ENCODE measurements at regions of chr16 and their contacts with region 1.

Region 1: DNA sequence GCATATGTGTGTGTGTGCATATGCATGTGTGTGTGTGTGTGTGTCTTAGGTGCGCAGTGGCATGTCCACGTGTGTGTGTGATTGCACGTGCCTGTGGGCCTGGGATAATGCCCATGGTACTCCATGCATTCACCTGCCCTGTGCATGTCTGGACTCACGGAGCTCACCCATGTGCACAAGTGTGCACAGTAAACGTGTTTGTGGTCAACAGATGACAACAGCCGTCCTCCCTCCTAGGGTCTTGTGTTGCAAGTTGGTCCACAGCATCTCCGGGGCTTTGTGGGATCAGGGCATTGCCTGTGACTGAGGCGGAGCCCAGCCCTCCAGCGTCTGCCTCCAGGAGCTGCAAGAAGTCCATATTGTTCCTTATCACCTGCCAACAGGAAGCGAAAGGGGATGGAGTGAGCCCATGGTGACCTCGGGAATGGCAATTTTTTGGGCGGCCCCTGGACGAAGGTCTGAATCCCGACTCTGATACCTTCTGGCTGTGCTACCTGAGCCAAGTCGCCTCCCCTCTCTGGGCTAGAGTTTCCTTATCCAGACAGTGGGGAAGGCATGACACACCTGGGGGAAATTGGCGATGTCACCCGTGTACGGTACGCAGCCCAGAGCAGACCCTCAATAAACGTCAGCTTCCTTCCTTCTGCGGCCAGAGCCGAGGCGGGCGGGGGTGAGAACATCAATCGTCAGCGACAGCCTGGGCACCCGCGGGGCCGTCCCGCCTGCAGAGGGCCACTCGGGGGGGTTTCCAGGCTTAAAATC is 47.6 kb downstream of the IL21R start:
- DNase-seq: peak; percentile 78
- ATAC-seq: peak; percentile 78
- H3K4me3 Mint-ChIP-seq: peak overlapping the region; percentile 85
- H3K27ac Mint-ChIP-seq: peak overlapping the region; percentile 99
- H3K4me1 Mint-ChIP-seq: peaks cover 97% of the 10 kb centered on the region
- H3K27me3 Mint-ChIP-seq: no peaks in the 10 kb centered on the region
- CTCF ChIP-seq: no peak

Region 2: GRCh38 chr16:27203429-27204231 is 246.0 kb before region 1 on chr16 and contains the start of gene KDM8:
- CTCF ChIA-PET with region 1: no interaction called
- POLR2A ChIA-PET with region 1: interaction called, 13 read pairs
- intact Hi-C with region 1: no loop called
- DNase-seq: peak; percentile 97
- ATAC-seq: peak; percentile 87
- H3K4me3 Mint-ChIP-seq: peak within 1 kb of the TSS; percentile 99
- H3K27ac Mint-ChIP-seq: peak within 1 kb of the TSS; percentile 100
- H3K4me1 Mint-ChIP-seq: peaks cover 66% of the 10 kb centered on the region
- H3K27me3 Mint-ChIP-seq: no peaks in the 10 kb centered on the region
- CTCF ChIP-seq: no peak
- total RNA-seq, gene KDM8: 13.4 and 17.9 TPM in 2 replicates

Region 3: DNA sequence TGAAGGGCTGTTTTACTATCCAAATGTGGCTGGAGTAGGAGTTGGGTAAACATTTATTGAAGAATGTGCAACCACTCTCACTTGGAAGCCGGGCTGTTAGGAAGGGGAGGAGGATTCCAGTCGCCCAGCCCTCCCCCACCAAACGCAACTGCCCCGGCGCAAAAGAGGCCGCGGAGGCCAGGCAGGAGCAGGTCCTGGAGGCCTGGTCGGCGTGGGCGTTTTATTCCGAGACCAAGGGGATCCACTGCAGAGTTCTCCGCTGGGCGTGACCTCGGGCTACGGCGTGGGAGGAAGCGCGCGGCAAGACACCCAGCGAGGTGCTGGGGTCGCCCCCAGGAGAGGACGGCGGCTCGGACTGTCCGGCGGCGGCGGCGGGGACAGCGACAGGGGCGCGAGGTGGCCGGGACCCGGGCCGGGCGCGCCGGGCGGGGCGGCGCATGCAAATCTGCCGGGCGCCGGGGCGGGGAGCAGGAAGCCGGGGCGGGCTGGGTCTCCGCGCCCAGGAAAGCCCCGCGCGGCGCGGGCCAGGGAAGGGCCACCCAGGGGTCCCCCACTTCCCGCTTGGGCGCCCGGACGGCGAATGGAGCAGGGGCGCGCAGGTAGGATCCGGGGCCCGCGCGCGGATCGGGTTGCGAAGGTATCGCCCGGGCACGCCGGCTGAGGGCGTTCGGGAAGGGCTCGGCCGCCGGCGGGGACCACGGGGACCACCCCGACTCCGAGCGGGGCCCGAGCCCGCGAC is 136.0 kb before region 1 on chr16 and contains the start of gene IL4R:
- CTCF ChIA-PET with region 1: no interaction called
- POLR2A ChIA-PET with region 1: interaction called, 6 read pairs
- intact Hi-C with region 1: loop called (anchors 1 kb)
- DNase-seq: peak; percentile 77
- ATAC-seq: peak; percentile 49
- H3K4me3 Mint-ChIP-seq: peak within 1 kb of the TSS; percentile 88
- H3K27ac Mint-ChIP-seq: peak within 1 kb of the TSS; percentile 90
- H3K4me1 Mint-ChIP-seq: peaks cover 76% of the 10 kb centered on the region
- H3K27me3 Mint-ChIP-seq: no peaks in the 10 kb centered on the region
- CTCF ChIP-seq: no peak
- total RNA-seq, gene IL4R: 176 and 202 TPM in 2 replicates

Region 4: DNA sequence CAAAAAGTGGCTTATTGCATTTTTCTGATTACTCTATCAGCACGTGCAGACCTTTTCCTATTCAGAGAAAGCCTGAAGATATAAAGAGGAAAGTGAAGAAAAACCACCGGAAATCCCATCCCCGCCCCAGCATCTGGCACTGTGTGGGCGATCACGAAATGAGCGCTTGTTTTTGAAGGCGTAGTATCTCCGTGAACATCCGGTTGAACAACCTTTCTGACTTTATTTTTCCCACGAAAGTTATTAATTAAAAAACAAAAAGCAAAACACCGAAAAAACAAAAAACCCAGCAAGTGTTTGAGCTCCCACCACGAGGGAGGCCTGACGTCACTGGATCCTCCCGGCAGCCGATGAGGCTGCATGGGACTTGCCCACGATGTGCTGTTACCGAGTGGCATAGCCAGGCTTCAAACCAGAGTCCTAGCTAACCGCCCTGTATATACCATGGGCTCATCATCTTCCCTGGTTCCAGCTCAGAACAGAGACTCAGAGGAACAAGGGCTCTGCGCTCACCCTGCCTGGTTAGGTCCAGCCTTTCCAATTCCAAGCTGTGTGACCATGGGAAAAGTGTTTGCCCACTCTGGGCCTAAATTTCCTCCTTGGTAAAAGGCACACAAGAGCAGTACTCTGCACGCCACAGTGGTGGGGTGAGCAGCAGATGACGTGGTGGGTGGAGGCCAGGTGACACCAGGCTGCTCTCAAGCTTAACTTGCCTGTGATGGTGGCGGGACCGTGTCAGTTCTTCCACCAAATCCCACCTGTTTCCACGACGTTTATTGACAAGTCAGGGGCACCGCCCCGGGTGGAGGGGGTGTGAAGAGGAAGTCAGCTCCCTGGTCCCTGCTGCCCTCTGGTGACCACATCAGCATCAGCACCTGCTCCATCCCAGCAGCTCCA is 81.9 kb before region 1 on chr16:
- CTCF ChIA-PET with region 1: interaction called, 13 read pairs
- POLR2A ChIA-PET with region 1: interaction called, 92 read pairs
- intact Hi-C with region 1: loop called (anchors 1 kb)
- DNase-seq: peak; percentile 76
- ATAC-seq: peak; percentile 78
- H3K4me3 Mint-ChIP-seq: peak overlapping the region; percentile 70
- H3K27ac Mint-ChIP-seq: peak overlapping the region; percentile 96
- H3K4me1 Mint-ChIP-seq: peaks cover 71% of the 10 kb centered on the region
- H3K27me3 Mint-ChIP-seq: no peaks in the 10 kb centered on the region
- CTCF ChIP-seq: no peak

Region 5: GRCh38 chr16:27401768-27402568 is 47.6 kb before region 1 on chr16 and contains the start of gene IL21R:
- CTCF ChIA-PET with region 1: interaction called, 3 read pairs
- POLR2A ChIA-PET with region 1: interaction called, 464 read pairs
- intact Hi-C with region 1: loop called (anchors 1 kb)
- DNase-seq: peak; percentile 76
- ATAC-seq: peak; percentile 53
- H3K4me3 Mint-ChIP-seq: peak within 1 kb of the TSS; percentile 99
- H3K27ac Mint-ChIP-seq: peak within 1 kb of the TSS; percentile 96
- H3K4me1 Mint-ChIP-seq: peaks cover 88% of the 10 kb centered on the region
- H3K27me3 Mint-ChIP-seq: no peaks in the 10 kb centered on the region
- CTCF ChIP-seq: no peak
- total RNA-seq, gene IL21R: 144 and 167 TPM in 2 replicates

Region 6: DNA sequence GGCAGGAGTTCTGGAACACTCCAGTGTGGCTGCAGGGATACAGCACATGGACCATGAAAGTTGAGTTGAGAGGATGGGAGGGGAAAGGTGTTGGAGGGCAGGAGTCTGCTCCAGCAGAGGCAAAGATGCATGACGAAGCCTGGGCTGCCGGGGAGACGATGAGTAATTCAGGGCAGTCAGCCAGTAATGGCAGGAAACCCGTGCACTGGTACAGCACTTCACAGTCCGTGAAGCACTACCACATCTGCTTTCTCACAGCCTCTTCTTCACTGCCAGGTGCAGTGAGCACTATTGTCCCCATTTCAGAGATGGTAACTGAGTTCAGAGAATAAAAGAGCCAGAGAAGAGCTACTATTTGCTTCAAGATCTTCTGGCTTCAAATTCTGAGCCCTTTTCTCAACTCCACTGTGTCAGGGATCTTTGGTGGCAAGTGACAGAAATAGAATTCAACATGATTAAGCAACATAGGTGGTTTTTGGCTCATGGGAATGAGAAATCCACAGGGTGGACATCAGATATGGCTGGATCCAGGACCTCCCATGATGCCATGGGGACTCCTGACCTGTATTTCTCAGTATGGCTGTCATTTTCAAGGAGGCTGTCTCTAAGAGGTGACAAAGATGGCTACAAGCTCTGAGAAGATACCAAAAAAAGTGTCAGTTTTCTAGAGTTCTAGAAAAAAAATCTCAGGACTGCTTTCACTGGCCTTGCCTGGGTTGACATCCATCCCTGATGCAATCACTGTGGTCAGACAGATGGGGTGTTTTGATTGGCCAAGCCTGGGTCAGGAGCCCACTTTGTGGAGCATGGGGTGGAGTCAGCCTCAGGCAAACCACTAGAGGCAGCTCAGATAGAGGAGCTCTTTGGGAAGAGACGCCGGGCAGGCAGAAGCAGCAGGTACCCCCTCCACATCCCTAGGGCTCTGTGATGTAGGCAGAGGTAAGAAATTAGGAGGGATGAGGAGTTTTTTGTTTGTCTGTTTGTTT is 22.9 kb before region 1 on chr16:
- CTCF ChIA-PET with region 1: interaction called, 7 read pairs
- POLR2A ChIA-PET with region 1: interaction called, 95 read pairs
- intact Hi-C with region 1: loop called (anchors 1 kb)
- DNase-seq: peak; percentile 62
- ATAC-seq: peak; percentile 79
- H3K4me3 Mint-ChIP-seq: peak overlapping the region; percentile 65
- H3K27ac Mint-ChIP-seq: peak overlapping the region; percentile 88
- H3K4me1 Mint-ChIP-seq: peaks cover 83% of the 10 kb centered on the region
- H3K27me3 Mint-ChIP-seq: no peaks in the 10 kb centered on the region
- CTCF ChIP-seq: no peak

Region 7: DNA sequence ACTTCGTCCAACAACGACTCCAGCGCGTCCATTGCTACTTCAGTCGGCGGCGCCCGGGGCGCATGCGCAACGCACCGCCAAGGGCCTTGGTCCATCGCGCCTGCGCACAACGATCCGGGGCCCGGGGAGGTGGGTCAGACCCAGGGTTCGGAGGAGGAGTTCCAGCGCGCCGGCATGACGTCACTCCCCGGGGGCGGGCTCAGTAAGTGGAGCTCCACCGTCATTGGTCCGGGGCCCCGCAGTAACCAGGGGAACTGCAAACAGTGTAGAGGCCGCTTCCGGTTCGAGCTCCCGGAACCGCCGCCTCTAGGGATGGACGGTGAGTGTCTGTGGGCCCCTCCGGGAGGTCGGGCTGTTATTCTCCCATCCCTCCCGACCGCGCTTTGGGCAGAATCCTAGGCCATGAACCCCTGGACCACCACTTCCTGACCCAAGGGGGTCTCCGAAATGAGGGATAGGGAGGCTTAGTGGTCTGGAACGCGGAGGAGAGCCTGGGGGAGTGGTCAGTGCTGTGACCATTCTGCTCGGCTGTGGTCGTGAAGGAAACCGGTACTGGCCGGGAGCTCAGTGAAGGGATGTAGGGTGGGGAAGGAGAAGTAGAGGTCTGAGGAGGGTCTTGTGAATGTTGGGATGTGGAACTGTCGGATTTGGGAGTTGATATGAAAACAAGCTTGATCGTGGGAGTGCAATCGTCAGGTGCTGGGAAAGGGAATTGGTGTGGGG is 100.4 kb after region 1 on chr16 and contains the starts of genes GTF3C1 and KATNIP:
- CTCF ChIA-PET with region 1: no interaction called
- POLR2A ChIA-PET with region 1: interaction called, 10 read pairs
- intact Hi-C with region 1: no loop called
- DNase-seq: peak; percentile 100
- ATAC-seq: peak; percentile 99
- H3K4me3 Mint-ChIP-seq: peak within 1 kb of the TSS; percentile 95
- H3K27ac Mint-ChIP-seq: peak within 1 kb of the TSS; percentile 94
- H3K4me1 Mint-ChIP-seq: peaks cover 34% of the 10 kb centered on the region
- H3K27me3 Mint-ChIP-seq: no peaks in the 10 kb centered on the region
- CTCF ChIP-seq: no peak
- total RNA-seq, gene GTF3C1: 47.7 and 52.3 TPM in 2 replicates
- total RNA-seq, gene KATNIP: 32.3 and 40.4 TPM in 2 replicates